Testis (tissue), 5 donors: ENCODE measurements at regions of chr12 and their contacts with region 1.

Region 1: GRCh38 chr12:93689076-93689834 is 12.1 kb downstream of the CRADD start:
- DNase-seq: no peak
- H3K4me3 ChIP-seq: no peak overlapping the region
- H3K27ac ChIP-seq: no peak overlapping the region
- H3K4me1 ChIP-seq: no peaks in the 10 kb centered on the region
- H3K27me3 ChIP-seq: no peaks in the 10 kb centered on the region
- CTCF ChIP-seq: no peak
- POLR2A ChIP-seq: no peak

Region 2: GRCh38 chr12:92928962-92929915 is 760.0 kb before region 1 on chr12 and contains the start of gene EEA1:
- intact Hi-C with region 1: loop called (anchors 5 kb)
- DNase-seq: peak; percentile 98
- H3K4me3 ChIP-seq: peak within 1 kb of the TSS; percentile 90 to 92
- H3K27ac ChIP-seq: peak within 1 kb of the TSS; percentile 97 to 98
- H3K4me1 ChIP-seq: peaks cover 20% of the 10 kb centered on the region
- H3K27me3 ChIP-seq: no peaks in the 10 kb centered on the region
- CTCF ChIP-seq: peak in 2 of 3 experiments; percentile 5 to 7
- POLR2A ChIP-seq: no peak
- total RNA-seq, gene EEA1: 14.3 to 14.9 TPM

Region 3: GRCh38 chr12:93751864-93752610 is 62.8 kb after region 1 on chr12:
- intact Hi-C with region 1: no loop called
- DNase-seq: no peak
- H3K4me3 ChIP-seq: no peak overlapping the region
- H3K27ac ChIP-seq: no peak overlapping the region
- H3K4me1 ChIP-seq: peaks cover 3% of the 10 kb centered on the region
- H3K27me3 ChIP-seq: no peaks in the 10 kb centered on the region
- CTCF ChIP-seq: no peak
- POLR2A ChIP-seq: no peak

Region 4: DNA sequence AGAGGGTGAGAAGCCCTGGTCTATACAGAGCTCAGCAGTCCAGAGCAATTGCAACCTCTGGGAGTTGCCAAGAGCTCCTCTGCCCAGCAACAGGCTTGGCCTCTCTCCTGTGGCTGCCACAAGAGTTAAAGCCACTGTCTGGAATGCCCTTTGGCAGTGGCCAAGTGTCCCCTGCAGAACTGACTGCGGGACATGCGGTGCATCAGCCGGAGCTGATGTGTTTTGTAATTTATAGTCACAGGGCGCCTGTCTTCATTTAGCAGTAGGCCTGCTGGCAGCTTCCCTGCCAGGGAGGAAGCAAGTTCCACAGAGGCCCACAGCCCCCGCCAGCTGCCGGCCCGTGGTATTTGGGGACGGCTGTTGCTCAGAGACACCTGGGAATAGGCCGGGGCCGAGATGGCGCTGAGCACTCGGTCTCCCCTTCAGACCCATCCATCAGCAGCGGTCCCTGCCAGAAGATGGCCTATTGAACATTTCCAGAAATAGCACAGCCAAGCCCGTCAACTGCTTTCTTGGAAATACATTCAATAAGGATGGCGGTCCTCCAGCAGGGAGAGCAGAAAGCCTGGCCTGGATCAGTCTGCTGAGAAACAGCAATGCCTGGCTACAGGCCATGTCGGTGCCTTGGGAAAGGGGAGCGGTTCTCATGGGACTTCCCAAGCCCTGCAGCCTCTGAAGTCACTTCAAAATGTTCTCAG is 205.3 kb after region 1 on chr12:
- intact Hi-C with region 1: no loop called
- DNase-seq: peak; percentile 70
- H3K4me3 ChIP-seq: no peak overlapping the region
- H3K27ac ChIP-seq: peak overlapping the region; percentile 18 to 32
- H3K4me1 ChIP-seq: peaks cover 12% of the 10 kb centered on the region
- H3K27me3 ChIP-seq: no peaks in the 10 kb centered on the region
- CTCF ChIP-seq: no peak
- POLR2A ChIP-seq: no peak

Region 5: DNA sequence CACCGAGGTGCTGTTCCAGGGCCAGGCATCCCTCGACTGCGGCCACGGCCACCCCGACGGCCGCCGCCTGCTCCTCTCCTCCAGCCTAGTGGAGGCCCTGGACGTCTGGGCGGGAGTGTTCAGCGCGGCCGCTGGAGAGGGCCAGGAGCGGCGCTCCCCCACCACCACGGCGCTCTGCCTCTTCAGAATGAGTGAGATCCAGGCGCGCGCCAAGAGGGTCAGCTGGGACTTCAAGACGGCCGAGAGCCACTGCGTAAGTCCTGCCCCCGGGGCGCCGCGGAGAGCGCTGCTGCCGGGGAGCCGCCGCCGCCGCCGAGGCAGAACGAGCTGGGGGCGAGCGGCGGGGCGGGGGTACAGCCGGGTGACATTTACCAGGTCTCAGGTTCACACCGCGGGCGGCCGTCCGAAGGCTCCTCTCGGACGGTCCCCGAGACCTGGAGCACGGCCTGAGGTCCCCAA is 460.6 kb after region 1 on chr12:
- intact Hi-C with region 1: no loop called
- DNase-seq: peak; percentile 65
- H3K4me3 ChIP-seq: peak overlapping the region; percentile 54 to 75
- H3K27ac ChIP-seq: peak overlapping the region; percentile 48 to 80
- H3K4me1 ChIP-seq: peaks cover 20% of the 10 kb centered on the region
- H3K27me3 ChIP-seq: no peaks in the 10 kb centered on the region
- CTCF ChIP-seq: no peak
- POLR2A ChIP-seq: no peak